ENCODE measurements at regions of chr19 and their contacts with region 1.

Region 1: DNA sequence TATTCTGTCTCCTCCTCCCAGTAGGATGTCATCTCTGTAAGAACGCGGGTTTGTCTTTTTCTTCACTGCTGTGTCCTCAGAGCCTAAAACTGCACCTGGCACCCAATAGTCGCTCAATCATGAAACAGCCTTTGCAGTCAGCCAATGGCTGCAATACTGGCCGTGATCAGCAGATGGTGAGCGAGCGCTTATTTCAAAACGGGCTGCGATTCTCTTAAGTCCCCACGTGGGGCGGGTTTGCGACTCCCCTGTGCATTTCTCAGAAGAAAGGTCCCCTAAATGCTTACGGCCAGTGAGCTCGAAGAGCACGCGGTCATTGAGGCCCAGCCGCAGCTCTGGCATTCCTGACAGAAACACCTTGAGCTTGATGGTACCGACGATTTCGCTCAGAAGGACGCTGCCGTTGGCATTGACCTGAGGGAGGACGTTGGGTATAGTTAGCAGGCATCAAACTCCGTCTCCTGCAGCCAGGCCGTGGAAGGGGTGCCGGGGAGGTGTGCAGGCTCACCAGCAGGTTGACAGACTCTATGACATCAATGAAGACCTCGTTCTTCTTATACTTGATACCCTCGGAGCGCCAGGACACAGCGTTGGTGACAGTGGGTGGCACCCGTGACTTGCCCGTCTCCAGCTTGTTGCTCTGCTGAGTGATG is 6.0 kb downstream of the AP1M2 start:
- DNase-seq: peak; percentile 95
- H3K4me3 ChIP-seq: peak overlapping the region in 1 of 8 donors; percentile 45
- H3K27ac ChIP-seq: peak overlapping the region in 1 of 8 donors; percentile 22
- H3K4me1 ChIP-seq: peaks cover 0 to 36% (median 13%) of the 10 kb centered on the region in 6 donors
- H3K27me3 ChIP-seq: no peaks in the 10 kb centered on the region
- CTCF ChIP-seq: peak; percentile 96 to 99 (median 98)
- POLR2A ChIP-seq: no peak

Region 2: DNA sequence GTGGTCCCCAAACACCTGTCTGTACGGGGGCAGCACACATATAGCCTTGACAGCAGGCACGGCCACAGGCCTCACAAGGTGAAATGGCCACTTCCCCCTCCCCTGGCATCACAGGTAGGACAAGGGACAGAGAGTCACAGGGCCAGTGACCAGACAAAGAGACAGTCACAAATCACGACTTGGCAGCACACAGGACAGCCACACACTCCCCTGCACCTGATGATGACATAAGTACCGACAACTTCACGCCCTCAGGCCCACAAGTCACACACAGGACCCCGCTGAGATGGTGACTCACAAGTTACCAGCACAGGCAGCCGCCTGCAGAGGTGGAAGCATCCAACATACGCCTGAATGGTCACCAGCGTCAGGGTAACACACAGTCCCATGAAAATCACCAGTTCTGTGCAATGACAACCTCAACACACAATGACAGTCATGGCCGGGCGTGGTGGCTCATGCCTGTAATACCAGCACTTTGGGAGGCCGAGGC is 217.3 kb before region 1 on chr19:
- intact Hi-C with region 1: no loop called
- DNase-seq: no peak
- H3K4me3 ChIP-seq: no peak overlapping the region
- H3K27ac ChIP-seq: no peak overlapping the region
- H3K4me1 ChIP-seq: no peaks in the 10 kb centered on the region
- H3K27me3 ChIP-seq: no peaks in the 10 kb centered on the region
- CTCF ChIP-seq: no peak
- POLR2A ChIP-seq: no peak

Region 3: DNA sequence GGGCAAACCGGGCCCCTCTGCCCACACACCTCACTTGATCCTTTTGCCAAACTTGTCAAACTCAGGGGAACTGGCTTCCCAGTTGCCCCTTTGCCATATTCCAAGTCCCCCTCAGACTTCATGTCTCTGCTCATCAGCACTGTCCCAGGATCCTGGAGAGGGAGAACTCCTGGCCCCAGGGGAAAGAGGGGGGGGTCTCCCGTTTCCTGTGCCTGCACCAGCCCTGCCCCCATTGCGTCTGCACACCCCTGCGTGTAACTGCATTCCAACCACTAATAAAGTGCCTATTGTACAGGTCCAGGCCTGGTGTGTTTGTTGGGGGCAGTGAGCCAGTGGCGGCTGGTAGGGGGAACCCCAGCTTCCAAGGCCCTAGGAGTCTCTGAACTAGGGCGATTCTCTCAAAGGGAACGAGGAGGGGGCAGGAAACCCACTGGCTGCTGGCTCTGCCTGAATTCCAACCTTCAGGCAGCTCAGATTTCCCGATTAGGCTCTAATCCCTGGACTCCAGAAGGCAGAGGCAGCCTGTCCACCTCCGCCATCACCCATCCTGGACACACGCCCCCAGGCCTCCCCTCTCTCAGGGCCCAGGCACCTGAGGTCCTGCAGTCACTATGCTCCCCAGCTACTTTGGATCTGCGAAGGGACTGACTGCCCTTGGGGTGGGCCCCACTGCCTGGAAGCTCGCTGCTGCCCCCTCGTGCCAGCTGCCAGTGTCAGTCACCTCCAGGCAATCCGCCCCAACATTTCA is 63.3 kb after region 1 on chr19:
- intact Hi-C with region 1: loop called (anchors 1 kb)
- DNase-seq: peak; percentile 96
- H3K4me3 ChIP-seq: no peak overlapping the region
- H3K27ac ChIP-seq: peak overlapping the region; percentile 22 to 76 (median 62)
- H3K4me1 ChIP-seq: peaks cover 16 to 60% (median 33%) of the 10 kb centered on the region in 6 donors
- H3K27me3 ChIP-seq: no peaks in the 10 kb centered on the region
- CTCF ChIP-seq: peak; percentile 85 to 99 (median 88)
- POLR2A ChIP-seq: no peak

Region 4: GRCh38 chr19:10695401-10696398 is 114.6 kb after region 1 on chr19:
- intact Hi-C with region 1: loop called (anchors 5 kb)
- DNase-seq: peak; percentile 97
- H3K4me3 ChIP-seq: peak overlapping the region in 6 of 8 donors; percentile 17 to 60 (median 23)
- H3K27ac ChIP-seq: no peak overlapping the region
- H3K4me1 ChIP-seq: peaks cover 10 to 31% (median 17%) of the 10 kb centered on the region in 6 donors
- H3K27me3 ChIP-seq: no peaks in the 10 kb centered on the region
- CTCF ChIP-seq: peak in 1 of 11 experiments; percentile 18
- POLR2A ChIP-seq: no peak

Measured in spleen (tissue), 13 donors.